Activated CD4-positive, alpha-beta memory T cell treated with anti-CD3 and anti-CD28 coated beads, Interleukin-2, amount 10 ng/mL, durations not matched to agents 7 days and 5 days (primary cell): ENCODE measurements at regions of chr9 and their contacts with region 1.

Region 1: DNA sequence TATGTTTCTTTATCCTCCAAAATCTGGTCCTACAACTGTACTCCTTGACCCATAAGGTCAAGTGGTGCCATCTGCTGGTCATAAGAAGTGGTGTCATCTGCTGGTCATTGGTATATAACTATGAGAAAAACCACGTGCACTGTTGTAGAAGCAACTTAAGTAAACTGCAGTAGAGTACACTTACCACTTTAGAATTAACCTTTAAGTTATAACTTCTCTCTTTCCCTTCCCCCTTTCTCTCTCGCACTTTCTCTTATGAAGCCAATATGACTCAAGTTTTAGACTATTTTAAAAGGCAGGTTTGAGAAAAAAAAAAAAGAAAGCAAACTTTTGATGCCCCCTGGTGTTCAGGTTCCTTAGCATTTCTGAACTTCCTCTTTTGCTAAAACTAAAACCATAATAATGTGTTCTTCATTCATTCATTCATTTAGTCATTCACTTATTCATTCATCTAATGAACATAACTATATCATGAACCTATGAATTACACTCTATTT is 12.8 kb upstream of the MTAP start:
- DNase-seq: peak; percentile 56
- H3K4me3 Mint-ChIP-seq: peak overlapping the region; percentile 40
- H3K27ac Mint-ChIP-seq: no peak overlapping the region
- H3K4me1 Mint-ChIP-seq: peaks cover 3% of the 10 kb centered on the region
- H3K27me3 Mint-ChIP-seq: peaks cover 35% of the 10 kb centered on the region

Region 2: DNA sequence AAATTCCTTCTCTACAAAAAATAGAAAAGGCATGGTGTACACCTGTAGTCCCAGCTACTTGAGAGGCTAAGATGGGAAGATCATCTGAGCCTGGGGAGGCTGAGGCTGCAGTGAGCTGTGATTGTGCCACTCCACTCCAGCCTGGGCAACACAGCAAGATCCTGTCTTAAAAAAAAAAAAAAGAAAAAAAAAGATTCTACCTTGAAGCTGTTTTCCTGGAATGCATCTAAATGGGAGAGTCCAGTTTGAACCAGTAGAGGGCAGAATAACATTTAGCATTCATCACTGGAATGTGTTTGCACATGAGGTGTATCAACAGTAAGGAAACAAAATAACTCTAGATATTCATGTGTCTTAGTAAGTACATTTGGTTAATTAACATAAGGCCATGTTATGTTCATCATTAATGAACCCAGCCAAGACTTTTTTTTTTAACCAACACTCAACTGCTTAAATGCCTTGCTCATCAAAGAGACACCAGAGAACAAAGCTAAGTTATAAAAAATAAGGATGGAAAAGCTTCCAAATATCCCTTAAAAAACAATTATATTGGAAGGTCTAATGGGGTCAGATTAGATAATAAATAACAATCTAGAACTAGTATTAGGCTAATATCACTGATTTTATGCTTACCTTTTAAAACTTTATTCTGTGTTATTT is 323.6 kb before region 1 on chr9:
- CTCF ChIA-PET with region 1: interaction called, 11 read pairs
- POLR2A ChIA-PET with region 1: no interaction called
- DNase-seq: no peak
- H3K4me3 Mint-ChIP-seq: no peak overlapping the region
- H3K27ac Mint-ChIP-seq: no peak overlapping the region
- H3K4me1 Mint-ChIP-seq: no peaks in the 10 kb centered on the region
- H3K27me3 Mint-ChIP-seq: peaks cover 24% of the 10 kb centered on the region

Region 3: DNA sequence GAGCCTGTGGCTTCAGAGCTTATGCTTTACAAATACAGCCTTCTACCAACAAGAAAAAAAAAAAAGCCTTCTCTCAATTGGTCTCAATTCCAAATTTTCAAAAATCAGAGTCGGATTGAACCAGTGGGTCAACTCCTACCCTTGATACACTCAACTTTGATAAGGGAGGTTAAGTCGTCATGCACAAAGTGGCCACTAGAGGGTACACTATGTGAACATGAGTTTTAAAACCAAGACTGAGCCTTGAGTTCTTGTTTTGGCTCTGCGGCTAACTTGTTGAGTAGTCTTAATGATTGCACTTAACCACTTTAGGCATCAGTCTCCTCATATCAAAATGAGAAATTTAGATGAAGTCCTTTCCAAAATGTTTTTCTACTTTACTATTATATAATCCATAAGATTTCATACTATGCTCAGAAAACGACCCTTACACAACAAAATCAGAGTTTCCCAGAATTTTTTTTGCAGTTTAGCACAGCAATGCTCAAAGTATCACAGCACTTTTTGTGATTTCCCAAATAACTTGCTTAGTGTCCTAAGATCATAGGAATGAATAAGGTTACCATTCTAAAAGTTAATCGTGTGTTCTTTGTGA is 80.0 kb before region 1 on chr9:
- CTCF ChIA-PET with region 1: interaction called, 18 read pairs
- POLR2A ChIA-PET with region 1: no interaction called
- DNase-seq: peak; percentile 61
- H3K4me3 Mint-ChIP-seq: no peak overlapping the region
- H3K27ac Mint-ChIP-seq: no peak overlapping the region
- H3K4me1 Mint-ChIP-seq: no peaks in the 10 kb centered on the region
- H3K27me3 Mint-ChIP-seq: peaks cover 17% of the 10 kb centered on the region

Region 4: DNA sequence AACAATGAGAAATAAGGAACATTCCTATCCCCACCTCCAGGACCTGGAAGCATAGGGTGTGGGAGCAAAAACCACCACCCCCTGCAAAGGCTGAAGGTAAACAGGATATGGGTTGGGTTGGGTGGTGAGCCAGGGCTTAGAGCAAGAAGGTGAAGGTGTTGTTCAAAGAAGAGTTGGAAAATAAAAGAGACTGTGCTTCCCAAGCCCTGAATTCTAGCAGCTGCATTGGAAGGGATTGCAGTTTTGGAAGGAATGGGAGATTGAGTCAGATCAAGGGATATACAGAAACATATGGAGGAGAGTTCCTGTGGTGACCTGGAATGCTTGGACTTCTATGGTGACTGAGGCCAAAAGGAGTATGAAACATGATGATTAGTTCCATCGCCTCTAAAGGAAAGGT is 11.9 kb before region 1 on chr9:
- CTCF ChIA-PET with region 1: interaction called, 10 read pairs
- POLR2A ChIA-PET with region 1: interaction called, 4 read pairs
- DNase-seq: no peak
- H3K4me3 Mint-ChIP-seq: no peak overlapping the region
- H3K27ac Mint-ChIP-seq: no peak overlapping the region
- H3K4me1 Mint-ChIP-seq: no peaks in the 10 kb centered on the region
- H3K27me3 Mint-ChIP-seq: peaks cover 15% of the 10 kb centered on the region